Activated CD4-positive, alpha-beta T cell treated with anti-CD3 and anti-CD28 coated beads for 36 hours (primary cell): ENCODE measurements at regions of chr6 and their contacts with region 1.

Region 1: DNA sequence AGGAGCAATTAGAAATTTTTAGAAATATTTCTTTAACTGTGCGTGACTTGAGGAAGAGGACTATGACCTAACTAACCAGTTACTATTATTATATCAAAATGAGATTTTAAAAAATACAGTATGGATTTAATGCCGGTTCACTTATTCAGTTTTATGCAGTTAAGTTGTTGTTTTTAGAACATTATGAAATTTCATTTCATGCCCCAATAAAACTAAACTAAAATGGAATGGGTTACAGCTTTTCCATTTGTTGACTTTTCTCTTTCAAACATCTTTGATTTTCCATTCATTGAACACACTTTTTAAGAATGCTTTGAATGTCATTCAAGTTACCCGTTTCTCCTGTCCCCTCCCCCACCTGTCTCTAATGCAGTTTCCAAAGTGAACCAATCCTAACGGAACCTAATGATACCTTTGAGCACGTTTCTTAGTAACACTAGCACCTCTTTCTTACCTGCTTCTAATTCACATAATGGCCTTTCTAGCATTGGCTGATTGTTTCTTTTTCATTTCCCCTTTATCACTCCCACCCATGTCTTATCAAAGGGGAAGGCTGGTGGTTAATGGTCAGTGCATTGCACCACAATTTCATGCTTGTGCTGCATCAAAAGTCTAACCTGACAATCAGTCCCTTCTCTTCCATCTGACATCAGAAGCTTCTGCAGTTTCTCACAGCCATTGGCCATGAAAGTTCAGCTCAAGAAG is 262.2 kb upstream of the TAB2 start:
- DNase-seq: no peak
- ATAC-seq: no peak
- H3K4me3 Mint-ChIP-seq: no peak overlapping the region
- H3K27ac Mint-ChIP-seq: no peak overlapping the region
- H3K4me1 Mint-ChIP-seq: peaks cover 35% of the 10 kb centered on the region
- H3K27me3 Mint-ChIP-seq: no peaks in the 10 kb centered on the region

Region 2: GRCh38 chr6:148999929-149000468 is 55.3 kb before region 1 on chr6:
- CTCF ChIA-PET with region 1: no interaction called
- POLR2A ChIA-PET with region 1: no interaction called
- intact Hi-C with region 1: no loop called
- DNase-seq: no peak
- ATAC-seq: peak; percentile 19
- H3K4me3 Mint-ChIP-seq: no peak overlapping the region
- H3K27ac Mint-ChIP-seq: peak overlapping the region; percentile 16
- H3K4me1 Mint-ChIP-seq: peaks cover 10% of the 10 kb centered on the region
- H3K27me3 Mint-ChIP-seq: no peaks in the 10 kb centered on the region

Region 3: DNA sequence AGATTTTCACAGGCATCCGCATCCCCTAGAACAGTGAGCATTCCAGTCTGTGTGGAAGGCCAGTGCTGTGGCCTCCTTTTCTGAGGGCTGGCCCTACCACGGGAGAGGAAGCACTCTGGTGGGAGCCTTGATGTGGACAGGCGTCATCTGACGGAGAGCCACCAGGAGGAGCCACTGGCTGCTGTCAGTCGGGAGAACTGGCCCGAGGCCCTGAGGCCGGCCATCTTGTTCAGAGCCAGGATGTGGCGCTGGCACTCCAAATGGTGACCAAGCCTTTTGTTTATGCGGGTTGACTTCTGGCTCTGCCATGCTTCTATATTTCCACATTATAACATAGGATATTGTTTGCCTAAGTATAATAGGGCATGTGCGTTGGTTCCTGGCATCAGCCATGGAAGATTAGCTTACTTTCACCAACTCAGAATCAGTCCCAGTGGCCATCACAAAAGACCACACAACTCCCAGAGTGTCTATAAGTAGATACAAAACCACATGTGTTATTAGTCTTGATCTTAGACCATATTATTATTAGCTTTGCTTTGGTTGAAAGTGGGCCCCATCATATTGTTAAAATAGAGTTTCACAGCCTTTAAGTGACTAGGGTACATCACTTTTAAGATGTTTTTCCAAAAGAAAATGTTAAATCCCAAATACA is 11.7 kb before region 1 on chr6:
- CTCF ChIA-PET with region 1: interaction called, 16 read pairs
- POLR2A ChIA-PET with region 1: no interaction called
- intact Hi-C with region 1: no loop called
- DNase-seq: peak; percentile 66
- ATAC-seq: peak; percentile 24
- H3K4me3 Mint-ChIP-seq: no peak overlapping the region
- H3K27ac Mint-ChIP-seq: no peak overlapping the region
- H3K4me1 Mint-ChIP-seq: peaks cover 46% of the 10 kb centered on the region
- H3K27me3 Mint-ChIP-seq: no peaks in the 10 kb centered on the region